Lower leg skin (tissue), 4 donors: ENCODE measurements at regions of chr16 and their contacts with region 1.

Region 1: DNA sequence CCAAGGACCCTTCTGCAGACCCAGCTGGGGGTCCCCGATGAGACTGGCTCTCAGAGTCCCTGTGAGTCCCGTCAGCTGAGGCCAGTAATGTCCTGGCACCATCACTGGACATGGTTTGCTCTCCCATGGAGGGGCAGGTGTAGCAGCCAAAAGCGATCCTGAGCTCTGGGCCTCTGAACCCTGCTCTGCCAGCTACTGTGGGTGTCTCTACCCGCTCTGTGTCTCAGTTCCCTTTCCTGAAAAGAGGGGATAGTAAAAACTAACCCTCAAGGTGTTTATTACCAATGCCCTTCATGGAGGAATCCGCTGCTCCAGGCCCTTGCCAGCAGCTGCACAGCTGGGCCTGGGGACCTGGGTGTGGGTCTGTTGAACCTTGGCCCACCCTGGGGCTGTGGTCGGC is 8.8 kb downstream of the TUBB3 start:
- DNase-seq: no peak
- H3K4me3 ChIP-seq: no peak overlapping the region
- CTCF ChIP-seq: no peak
- POLR2A ChIP-seq: no peak

Region 2: DNA sequence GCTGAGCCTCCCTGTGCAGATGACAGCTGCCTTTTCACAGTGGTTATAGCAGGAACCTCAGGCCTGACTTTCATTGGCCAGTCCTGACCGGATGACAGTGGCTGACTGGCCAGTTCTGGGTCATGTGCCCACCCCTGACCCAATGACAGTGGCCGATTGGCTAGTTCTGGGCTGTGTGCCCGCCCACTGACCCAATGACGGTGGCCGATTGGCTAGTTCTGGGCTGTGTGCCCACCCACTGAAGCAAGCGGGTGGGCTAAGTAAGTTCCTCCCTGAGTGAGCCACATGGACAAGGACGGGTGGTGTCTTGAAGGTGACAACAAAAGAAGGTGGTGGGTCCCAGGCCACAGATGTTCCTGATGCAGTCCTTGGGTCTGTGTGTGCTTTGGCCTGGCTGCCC is 26.1 kb after region 1 on chr16:
- intact Hi-C with region 1: no loop called
- DNase-seq: peak in 1 of 2 donors; percentile 46
- H3K4me3 ChIP-seq: no peak overlapping the region
- CTCF ChIP-seq: no peak
- POLR2A ChIP-seq: no peak

Region 3: DNA sequence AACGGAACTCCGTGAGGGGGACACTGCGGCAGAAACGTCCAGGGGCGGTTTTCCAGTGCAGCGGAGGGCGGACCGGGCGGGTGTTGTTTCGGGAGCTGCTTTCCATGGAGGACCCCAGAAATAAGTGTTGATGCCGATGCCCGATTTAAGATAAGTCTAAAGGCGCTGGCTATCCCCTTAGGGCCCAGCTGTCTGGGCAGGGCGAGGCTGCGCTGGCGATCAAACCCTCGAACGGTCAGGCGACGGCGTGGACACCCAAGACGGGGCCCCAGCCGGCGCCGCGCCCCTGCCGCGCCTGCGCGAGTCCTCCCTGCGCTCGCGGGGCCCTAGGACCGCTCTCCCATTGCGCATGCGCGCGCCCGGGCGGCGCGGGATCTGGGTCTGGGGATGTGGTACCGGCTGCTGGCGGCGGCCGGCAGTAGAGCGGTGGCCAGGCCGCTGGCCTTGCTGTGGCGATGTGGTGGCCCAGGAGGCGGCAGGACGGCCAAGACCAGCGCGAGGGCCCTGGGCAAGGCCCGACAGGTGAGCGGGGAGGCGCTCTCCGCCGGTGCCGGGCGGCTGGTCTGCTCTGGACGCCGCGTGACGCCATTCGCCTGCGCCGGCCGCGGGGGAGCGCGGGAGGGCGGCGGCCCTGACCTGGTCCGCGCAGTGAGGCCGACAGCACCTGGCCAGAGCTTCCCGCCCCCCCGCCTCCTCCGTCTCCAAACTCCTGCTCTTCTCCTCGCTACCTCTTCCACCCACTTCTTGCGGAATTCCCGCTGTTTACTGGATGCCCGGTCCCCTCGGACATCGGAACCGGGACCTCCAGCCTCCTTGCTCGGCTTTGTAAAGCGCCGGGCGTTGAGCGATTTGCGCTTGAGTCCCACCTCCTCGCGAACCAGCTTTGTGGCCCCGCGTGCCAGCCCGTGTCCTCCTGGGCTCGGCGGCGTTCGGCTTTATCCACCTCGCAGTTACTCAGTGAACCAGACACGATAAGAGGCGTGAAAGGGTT is 40.6 kb after region 1 on chr16:
- intact Hi-C with region 1: loop called (anchors 1 kb)
- DNase-seq: peak; percentile 81 to 98
- H3K4me3 ChIP-seq: peak overlapping the region; percentile 68
- CTCF ChIP-seq: no peak
- POLR2A ChIP-seq: peak in 1 of 2 donors; percentile 15

Region 4: GRCh38 chr16:89987169-89987568 is 55.2 kb after region 1 on chr16:
- intact Hi-C with region 1: no loop called
- DNase-seq: no peak
- H3K4me3 ChIP-seq: no peak overlapping the region
- CTCF ChIP-seq: no peak
- POLR2A ChIP-seq: no peak